Mucosa of descending colon (tissue), 3 donors: ENCODE measurements at regions of chr11 and their contacts with region 1.

Region 1: DNA sequence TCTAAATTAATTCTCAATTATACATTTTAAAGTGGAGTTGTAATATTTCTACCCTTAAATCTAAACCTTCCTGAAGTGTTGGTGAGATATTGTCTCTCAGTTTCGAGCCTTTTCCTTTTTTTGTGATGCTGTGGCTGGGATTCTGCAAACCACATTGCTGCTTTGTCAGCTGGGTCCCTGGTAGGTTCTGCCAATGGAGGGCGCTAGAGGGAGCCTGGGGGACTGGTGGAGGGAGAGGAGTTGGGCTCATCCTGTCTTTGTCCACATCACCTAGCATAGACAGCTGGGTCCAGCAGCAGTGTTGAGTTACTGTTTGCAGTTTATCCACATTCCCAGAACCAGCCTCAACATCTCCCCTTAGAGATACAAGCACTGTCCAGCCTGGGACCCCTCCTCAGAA is 41.0 kb downstream of the TRAF6 start:
- DNase-seq: no peak
- ATAC-seq: no peak
- H3K4me3 ChIP-seq: no peak overlapping the region
- H3K4me1 ChIP-seq: peaks cover 4% of the 10 kb centered on the region
- CTCF ChIP-seq: no peak

Region 2: GRCh38 chr11:35688023-35688422 is 781.0 kb before region 1 on chr11:
- intact Hi-C with region 1: loop called in 1 of 2 experiments (anchors 10 kb)
- DNase-seq: no peak
- ATAC-seq: no peak
- H3K4me3 ChIP-seq: no peak overlapping the region
- H3K4me1 ChIP-seq: no peaks in the 10 kb centered on the region
- CTCF ChIP-seq: no peak